H1 (cell line): ENCODE measurements at regions of chr19 and their contacts with region 1.

Region 1: DNA sequence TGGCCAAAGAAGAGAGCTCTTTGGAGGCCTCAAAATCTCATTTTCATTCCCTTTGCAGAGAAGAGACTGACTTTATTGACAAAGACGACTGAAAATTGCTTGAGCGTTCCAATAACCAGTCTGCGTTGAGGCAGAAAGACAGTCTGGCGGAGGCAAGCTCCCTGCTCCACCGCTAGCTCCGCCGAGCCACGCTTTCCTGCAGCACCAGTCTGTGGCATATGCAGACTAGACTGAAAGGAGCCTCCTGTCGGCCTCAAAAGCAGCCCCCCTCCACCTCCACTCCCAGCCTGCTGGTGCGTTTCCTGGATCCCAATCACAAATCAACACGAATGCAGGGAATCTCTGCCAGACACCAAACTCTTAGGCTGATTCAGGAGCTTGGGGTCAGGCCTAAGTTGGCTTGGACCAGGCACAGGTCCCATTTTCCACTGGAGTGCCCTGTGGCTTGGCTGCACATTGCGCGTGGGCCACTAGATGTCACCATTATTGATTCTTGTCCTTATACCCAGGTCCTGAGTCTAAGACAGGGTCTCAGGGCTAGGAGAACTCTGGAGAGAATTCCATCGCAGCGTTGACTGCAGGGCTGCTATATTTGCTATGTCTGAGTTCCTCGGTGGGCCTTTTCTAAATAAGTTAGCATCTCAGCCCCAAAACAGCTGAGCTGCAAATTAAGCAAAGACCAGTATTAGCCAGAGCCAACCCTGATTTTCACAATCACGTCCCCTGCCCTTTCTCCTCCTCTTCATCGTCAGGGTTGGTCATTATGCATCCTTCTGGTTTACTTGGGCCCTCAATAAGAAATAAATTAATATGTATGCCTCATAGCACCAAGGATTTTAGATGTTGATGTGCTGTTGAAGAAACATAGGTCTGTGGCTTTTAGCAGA is 5.2 kb upstream of the ZNF507 start:
- DNase-seq: peak in 1 of 2 experiments; percentile 70
- H3K4me3 ChIP-seq: no peak overlapping the region
- H3K27ac ChIP-seq: no peak overlapping the region
- H3K4me1 ChIP-seq: no peaks in the 10 kb centered on the region
- H3K27me3 ChIP-seq: peaks cover 0 to 3% (median 0%) of the 10 kb centered on the region in 4 experiments; a peak in 1 of 7 replicates
- CTCF ChIP-seq: peak; percentile 53 to 75 (median 65)
- EP300 ChIP-seq: no peak
- POLR2A ChIP-seq: no peak
- RAD21 ChIP-seq: peak; percentile 32 to 39; a peak in 3 of 4 replicates

Region 2: DNA sequence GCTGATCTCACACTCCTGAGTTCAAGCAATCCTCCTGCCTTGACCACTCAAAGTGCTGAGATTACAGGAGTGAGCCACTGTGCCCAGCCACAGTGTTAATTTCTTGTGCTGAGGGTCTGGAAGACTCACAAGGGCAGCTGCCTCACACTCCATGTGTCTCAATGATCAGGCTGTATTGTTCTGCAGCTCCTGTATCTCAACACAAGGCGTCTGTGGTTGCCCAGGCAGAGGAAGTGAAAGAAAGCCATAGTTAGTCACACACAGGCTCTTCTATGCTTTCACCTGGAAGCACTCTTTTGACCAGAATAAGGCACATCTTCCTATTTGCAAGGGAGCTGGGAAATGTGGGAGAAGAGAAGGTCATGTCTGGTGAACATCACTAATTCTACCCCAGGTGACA is 102.2 kb before region 1 on chr19:
- CTCF ChIA-PET with region 1: no interaction called
- POLR2A ChIA-PET with region 1: no interaction called
- DNase-seq: no peak
- H3K4me3 ChIP-seq: no peak overlapping the region
- H3K27ac ChIP-seq: no peak overlapping the region
- H3K4me1 ChIP-seq: no peaks in the 10 kb centered on the region
- H3K27me3 ChIP-seq: no peaks in the 10 kb centered on the region
- CTCF ChIP-seq: no peak
- EP300 ChIP-seq: no peak
- POLR2A ChIP-seq: no peak
- RAD21 ChIP-seq: no peak

Region 3: GRCh38 chr19:32318880-32319520 is 21.2 kb before region 1 on chr19:
- CTCF ChIA-PET with region 1: interaction called, 31 read pairs
- POLR2A ChIA-PET with region 1: interaction called, 9 read pairs
- DNase-seq: peak in 1 of 2 experiments; percentile 73
- H3K4me3 ChIP-seq: no peak overlapping the region
- H3K27ac ChIP-seq: peak overlapping the region; percentile 66; the same call in 1 of the 2 replicates
- H3K4me1 ChIP-seq: peaks cover 0 to 3% (median 0%) of the 10 kb centered on the region in 4 experiments; a peak in 1 of 7 replicates
- H3K27me3 ChIP-seq: no peaks in the 10 kb centered on the region
- CTCF ChIP-seq: peak; percentile 29 to 51 (median 40)
- EP300 ChIP-seq: no peak
- POLR2A ChIP-seq: peak; percentile 48 to 62; a peak in 2 of 3 replicates
- RAD21 ChIP-seq: peak; percentile 17 to 30; a peak in 2 of 4 replicates

Region 4: DNA sequence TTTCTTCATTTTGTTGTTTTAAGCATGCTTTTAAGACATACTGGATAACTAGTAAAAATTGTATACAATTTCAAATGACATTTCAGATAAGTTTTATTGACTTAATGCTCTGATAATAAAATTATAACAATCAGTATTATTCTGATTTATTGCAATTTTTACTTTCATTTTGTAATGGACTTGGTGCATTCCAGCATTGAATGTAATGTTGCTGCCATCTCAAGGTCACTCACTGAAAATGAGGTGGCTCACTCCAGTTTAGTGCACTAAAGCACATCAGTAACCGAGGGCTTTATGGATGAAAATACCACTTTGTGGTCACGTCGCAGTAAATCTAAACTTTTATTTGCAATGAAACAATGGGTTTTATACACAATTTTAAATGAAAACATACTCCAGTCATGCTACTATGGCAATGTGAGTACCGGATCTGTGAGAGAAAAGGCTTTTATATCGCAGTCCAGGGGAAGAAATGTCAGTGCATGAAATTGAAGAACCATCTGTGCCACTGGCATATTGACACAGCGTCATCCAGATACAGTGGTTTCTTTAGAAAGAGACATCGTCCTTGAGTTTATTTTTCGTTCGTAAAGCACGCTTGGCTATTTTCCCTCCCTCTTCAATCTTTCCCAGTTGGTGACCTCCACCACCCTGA is 15.5 kb before region 1 on chr19:
- CTCF ChIA-PET with region 1: interaction called, 31 read pairs
- POLR2A ChIA-PET with region 1: interaction called, 4 read pairs
- DNase-seq: no peak
- H3K4me3 ChIP-seq: no peak overlapping the region
- H3K27ac ChIP-seq: no peak overlapping the region
- H3K4me1 ChIP-seq: no peaks in the 10 kb centered on the region
- H3K27me3 ChIP-seq: no peaks in the 10 kb centered on the region
- CTCF ChIP-seq: no peak; a peak in 1 of 4 replicates
- EP300 ChIP-seq: no peak
- POLR2A ChIP-seq: no peak
- RAD21 ChIP-seq: peak; percentile 22 to 28; a peak in 2 of 4 replicates

Region 5: GRCh38 chr19:32357720-32358119 is 17.5 kb after region 1 on chr19:
- CTCF ChIA-PET with region 1: interaction called, 10 read pairs
- POLR2A ChIA-PET with region 1: no interaction called
- DNase-seq: no peak
- H3K4me3 ChIP-seq: no peak overlapping the region
- H3K27ac ChIP-seq: no peak overlapping the region
- H3K4me1 ChIP-seq: no peaks in the 10 kb centered on the region
- H3K27me3 ChIP-seq: no peaks in the 10 kb centered on the region
- CTCF ChIP-seq: no peak
- EP300 ChIP-seq: no peak
- POLR2A ChIP-seq: no peak
- RAD21 ChIP-seq: no peak